Right cardiac atrium (tissue), 5 donors: ENCODE measurements at regions of chr9 and their contacts with region 1.

Region 1: DNA sequence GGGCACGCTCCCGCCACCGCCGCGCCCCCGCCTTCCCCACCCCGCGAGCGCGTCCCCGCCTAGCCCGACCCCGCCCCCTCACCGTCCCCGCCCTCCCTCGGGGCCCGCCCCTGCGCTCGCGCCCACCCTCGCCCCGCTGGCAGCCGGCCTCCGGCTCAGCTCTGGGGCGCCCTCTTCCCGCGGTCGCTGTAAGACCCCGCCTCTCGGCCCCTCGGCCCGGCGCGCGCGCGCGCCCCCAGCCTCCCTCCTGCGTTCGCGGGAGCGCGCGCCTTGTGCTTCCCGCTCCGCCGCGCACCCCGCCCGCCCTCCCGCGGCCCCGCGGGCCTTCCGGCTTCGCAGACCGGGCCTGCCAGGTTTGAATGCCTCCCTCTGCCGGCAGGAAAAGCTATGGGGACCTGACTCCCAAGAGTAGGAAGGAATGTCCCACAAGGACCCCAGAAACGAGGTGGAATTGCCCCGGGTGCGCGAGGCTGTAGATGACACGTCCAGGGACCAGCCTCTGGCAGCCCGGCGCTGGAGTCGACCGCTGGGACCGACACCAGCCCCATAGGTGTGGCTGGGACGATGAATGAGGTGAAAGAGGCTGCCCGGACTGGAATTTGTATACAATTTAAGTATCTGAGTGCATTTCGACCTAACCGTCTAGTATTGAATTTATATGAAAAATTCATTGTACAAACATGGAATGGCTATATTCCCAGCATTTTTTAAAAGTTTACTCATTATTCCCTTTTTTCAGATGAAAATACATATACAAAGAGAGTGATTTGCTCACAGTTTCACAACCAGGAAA is 416 bp upstream of the PTBP3 start:
- DNase-seq: peak; percentile 95 to 99 (median 98)
- ATAC-seq: peak; percentile 97
- H3K4me3 ChIP-seq: peak overlapping the region; percentile 93
- H3K27ac ChIP-seq: peak overlapping the region; percentile 100
- H3K4me1 ChIP-seq: no peaks in the 10 kb centered on the region
- H3K27me3 ChIP-seq: no peaks in the 10 kb centered on the region

Region 2: DNA sequence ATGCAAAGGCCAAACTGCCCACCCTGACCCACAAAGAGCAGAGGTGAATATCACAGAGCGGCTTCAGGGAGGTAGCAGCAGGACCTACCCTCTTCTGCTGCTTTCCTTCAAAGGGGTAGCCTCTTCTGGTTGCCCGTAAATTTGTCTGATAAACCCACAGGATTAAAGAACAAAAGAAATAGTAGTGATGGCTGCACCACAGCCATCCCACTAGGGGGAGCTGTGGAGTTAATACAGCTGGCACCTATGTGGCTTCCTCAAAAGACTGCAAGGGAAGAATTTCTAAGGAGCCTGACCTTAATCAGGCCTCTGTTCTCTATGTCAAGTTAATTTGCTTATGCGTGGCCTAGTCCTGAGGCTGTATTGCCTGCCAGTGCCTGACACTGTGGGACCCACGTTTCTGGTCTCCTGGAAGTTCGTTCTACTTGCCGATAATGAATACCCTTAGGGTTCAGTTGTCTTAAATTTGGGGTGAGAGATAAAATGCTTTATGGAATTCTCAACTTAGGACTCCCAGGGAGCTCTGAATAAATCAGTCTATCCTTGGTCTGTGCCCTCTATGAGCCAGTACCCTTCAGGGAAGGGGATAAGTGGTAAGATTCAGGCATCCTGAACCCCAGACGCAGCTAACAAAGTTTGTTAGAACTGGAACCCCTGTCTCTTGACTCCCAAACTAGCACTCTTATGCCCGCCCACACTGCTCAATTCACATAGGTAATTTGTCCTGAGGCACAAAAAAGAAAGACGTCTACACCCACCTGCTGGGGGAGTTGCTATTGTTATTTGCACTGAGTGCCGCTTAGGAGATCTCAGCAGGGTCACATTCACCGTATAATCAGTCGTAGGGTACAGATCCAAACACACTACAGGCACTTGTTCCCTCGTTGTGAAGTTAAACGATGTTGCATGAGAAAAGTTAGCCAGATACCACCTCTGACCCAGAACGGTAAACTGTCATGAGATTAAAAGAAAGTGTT is 235.8 kb before region 1 on chr9:
- intact Hi-C with region 1: loop called in 1 of 4 experiments (anchors 10 kb)
- DNase-seq: peak; percentile 41 to 75 (median 67)
- ATAC-seq: peak; percentile 54 to 79
- H3K4me3 ChIP-seq: no peak overlapping the region
- H3K27ac ChIP-seq: no peak overlapping the region
- H3K4me1 ChIP-seq: no peaks in the 10 kb centered on the region
- H3K27me3 ChIP-seq: no peaks in the 10 kb centered on the region

Region 3: DNA sequence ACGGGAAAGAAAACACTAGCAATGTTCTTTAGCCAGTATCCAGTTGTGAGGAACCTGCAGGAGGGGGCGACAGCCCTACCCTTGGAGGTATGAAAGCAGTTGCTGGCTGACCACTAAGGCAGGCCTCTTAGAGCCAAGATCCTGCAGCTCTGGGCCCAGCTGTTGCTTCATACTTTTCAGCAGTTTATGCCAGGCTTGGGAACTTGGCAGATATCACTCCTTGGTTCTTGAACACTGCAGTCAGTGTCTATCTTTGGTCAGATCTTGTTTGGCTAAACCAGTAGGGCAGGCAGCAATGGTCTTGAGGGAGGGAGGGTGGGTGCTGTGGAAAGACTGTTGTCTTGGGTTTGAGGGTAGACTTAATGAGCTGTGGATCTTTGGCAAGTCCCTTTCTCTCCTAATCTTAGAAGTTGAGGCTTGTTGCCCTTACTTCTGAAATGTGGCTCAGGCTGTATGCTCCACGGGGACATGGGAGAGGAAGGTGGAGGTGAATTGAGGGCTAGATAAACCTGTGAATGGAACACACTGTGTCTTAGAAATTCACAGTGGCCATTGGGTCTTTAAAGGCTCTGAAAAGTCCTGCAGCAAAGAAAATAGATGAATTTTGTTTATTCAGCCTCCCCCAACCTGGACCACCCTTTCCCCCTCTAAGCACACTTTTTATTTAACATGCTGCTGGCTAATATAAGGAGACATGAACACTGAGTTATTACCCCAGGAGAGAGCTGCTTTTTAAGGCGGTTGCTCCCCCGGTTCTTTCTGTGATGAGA is 1579.8 kb after region 1 on chr9:
- intact Hi-C with region 1: no loop called
- DNase-seq: no peak
- ATAC-seq: peak; percentile 37 to 61
- H3K4me3 ChIP-seq: no peak overlapping the region
- H3K27ac ChIP-seq: no peak overlapping the region
- H3K4me1 ChIP-seq: no peaks in the 10 kb centered on the region
- H3K27me3 ChIP-seq: no peaks in the 10 kb centered on the region